Activated CD4-positive, alpha-beta T cell treated with anti-CD3 and anti-CD28 coated beads for 36 hours (primary cell): ENCODE measurements at regions of chr4 and their contacts with region 1.

Region 1: DNA sequence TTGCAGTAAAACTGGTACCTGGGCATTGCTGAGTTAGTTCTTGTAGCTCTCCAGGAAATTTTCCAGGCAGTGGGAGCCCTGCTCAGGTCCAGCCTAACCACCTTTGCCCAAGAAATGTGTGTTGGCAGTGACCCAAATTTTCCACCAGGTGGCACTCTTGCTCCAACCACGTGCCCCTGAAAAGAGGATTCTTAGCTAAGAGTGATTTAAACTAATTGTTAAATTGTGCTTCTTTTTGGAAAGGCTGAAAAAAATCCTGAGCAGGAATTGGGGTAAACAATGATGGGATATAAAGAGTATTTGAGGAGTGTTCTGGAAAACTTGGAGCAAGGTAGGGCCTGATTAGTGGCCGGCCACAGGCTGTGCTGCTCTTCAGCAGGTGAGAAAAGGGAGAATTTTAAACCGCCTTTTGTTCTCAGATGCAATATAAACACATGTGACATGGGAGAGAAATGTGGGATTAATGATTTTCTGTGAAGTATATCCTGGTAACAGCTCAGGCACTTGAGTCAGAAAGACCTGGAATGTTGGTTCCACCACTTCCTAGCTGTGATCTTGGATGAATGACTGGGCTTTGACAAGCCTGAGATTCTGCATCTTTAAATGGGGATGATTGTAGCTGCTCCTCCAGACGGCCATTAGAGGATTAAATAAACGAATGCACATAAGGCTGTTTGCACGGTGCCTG is 219.6 kb downstream of the PTTG2 start:
- DNase-seq: peak; percentile 84
- ATAC-seq: peak; percentile 55
- H3K4me3 Mint-ChIP-seq: no peak overlapping the region
- H3K27ac Mint-ChIP-seq: no peak overlapping the region
- H3K4me1 Mint-ChIP-seq: peaks cover 37% of the 10 kb centered on the region
- H3K27me3 Mint-ChIP-seq: peaks cover 2% of the 10 kb centered on the region

Region 2: DNA sequence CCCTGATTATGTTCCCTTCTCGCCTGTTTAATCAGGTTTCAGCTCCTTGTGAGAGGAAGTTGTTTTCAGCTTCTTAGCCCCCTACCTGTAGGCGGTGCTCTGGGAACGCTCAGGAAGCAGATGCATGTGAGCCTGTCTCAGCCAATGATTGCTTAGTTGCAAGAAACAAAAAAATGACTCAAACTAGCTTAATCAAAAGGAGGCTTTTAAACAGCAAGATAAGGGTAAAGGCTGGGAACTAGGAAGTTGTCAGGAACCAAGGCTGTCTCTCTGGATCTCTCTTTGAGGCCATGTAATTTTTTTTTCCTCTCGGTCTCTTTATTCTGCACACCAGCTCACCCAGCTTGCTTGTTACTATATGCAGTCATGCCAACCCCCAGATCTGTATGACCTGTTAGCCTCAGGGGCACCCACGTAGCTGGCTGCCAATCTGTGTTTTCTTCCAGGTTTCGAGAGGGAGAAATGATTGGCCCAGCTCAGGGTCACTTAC is 110.5 kb before region 1 on chr4:
- CTCF ChIA-PET with region 1: interaction called, 16 read pairs
- POLR2A ChIA-PET with region 1: no interaction called
- intact Hi-C with region 1: no loop called
- DNase-seq: peak; percentile 65
- ATAC-seq: peak; percentile 83
- H3K4me3 Mint-ChIP-seq: no peak overlapping the region
- H3K27ac Mint-ChIP-seq: peak overlapping the region; percentile 59
- H3K4me1 Mint-ChIP-seq: peaks cover 20% of the 10 kb centered on the region
- H3K27me3 Mint-ChIP-seq: no peaks in the 10 kb centered on the region

Region 3: GRCh38 chr4:38223782-38224236 is 44.0 kb after region 1 on chr4:
- CTCF ChIA-PET with region 1: no interaction called
- POLR2A ChIA-PET with region 1: no interaction called
- intact Hi-C with region 1: no loop called
- DNase-seq: no peak
- ATAC-seq: no peak
- H3K4me3 Mint-ChIP-seq: no peak overlapping the region
- H3K27ac Mint-ChIP-seq: no peak overlapping the region
- H3K4me1 Mint-ChIP-seq: no peaks in the 10 kb centered on the region
- H3K27me3 Mint-ChIP-seq: no peaks in the 10 kb centered on the region

Region 4: GRCh38 chr4:38243388-38244053 is 63.7 kb after region 1 on chr4:
- CTCF ChIA-PET with region 1: interaction called, 11 read pairs
- POLR2A ChIA-PET with region 1: no interaction called
- intact Hi-C with region 1: no loop called
- DNase-seq: no peak
- ATAC-seq: peak; percentile 44
- H3K4me3 Mint-ChIP-seq: no peak overlapping the region
- H3K27ac Mint-ChIP-seq: no peak overlapping the region
- H3K4me1 Mint-ChIP-seq: peaks cover 19% of the 10 kb centered on the region
- H3K27me3 Mint-ChIP-seq: no peaks in the 10 kb centered on the region

Region 5: GRCh38 chr4:38562751-38563198 is 382.9 kb after region 1 on chr4:
- CTCF ChIA-PET with region 1: no interaction called
- POLR2A ChIA-PET with region 1: no interaction called
- intact Hi-C with region 1: loop called in 1 of 2 experiments (anchors 2 kb)
- DNase-seq: no peak
- ATAC-seq: no peak
- H3K4me3 Mint-ChIP-seq: no peak overlapping the region
- H3K27ac Mint-ChIP-seq: no peak overlapping the region
- H3K4me1 Mint-ChIP-seq: peaks cover 19% of the 10 kb centered on the region
- H3K27me3 Mint-ChIP-seq: peaks cover 8% of the 10 kb centered on the region

Region 6: DNA sequence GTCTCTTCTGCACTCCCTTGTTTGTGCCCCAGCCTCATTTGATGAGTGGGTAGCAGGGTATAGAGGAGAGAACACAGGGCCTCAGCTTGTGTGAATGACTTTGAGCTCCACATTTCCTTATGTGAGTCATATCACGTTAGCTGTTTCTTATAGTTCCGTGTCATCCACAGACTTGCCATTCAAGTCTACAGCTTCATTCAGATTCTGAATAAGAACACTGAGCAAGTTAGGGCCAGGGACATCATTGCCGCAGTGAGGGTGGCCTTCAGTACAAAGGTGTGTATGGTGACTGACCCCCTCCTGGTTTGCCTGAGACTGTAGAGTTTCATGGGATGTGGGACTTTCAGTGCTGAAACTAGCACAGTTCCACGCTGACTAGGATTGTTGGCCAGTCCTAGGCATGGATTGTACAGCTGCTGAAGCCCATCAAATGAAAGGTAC is 507.8 kb after region 1 on chr4:
- CTCF ChIA-PET with region 1: interaction called, 11 read pairs
- POLR2A ChIA-PET with region 1: no interaction called
- intact Hi-C with region 1: no loop called
- DNase-seq: peak; percentile 39
- ATAC-seq: peak; percentile 97
- H3K4me3 Mint-ChIP-seq: no peak overlapping the region
- H3K27ac Mint-ChIP-seq: peak overlapping the region; percentile 69
- H3K4me1 Mint-ChIP-seq: peaks cover 60% of the 10 kb centered on the region
- H3K27me3 Mint-ChIP-seq: no peaks in the 10 kb centered on the region

Region 7: DNA sequence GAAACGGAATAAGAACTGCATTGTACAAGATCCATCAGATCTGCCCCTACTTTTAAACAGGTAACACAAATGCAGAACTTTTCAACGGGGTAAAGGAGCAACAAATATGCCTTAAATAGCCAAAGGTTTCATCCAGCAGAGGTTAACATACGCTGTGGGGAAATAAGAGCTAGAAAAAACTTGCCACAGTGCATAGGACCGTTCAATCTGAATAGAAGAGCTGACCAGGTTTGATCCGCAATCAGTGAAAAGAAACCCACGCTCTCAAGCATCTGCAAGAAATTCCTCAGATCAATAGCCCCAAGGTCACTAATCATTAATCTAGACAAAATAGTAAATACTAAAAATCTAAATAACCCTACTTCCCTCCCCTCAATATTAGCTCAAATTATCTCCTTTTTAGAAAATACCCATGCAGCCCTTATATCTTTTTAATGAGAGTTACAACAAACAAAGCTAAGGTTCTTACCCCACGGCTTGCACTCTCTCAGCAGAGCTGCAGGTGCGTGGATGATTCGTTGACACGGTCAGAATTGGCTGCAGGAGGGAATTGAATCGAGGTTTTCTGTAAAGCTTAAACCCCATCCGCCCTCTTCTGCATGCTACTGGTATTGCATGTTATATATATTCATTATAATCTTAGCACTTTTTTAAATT is 602.7 kb after region 1 on chr4 and contains the start of gene TLR10:
- CTCF ChIA-PET with region 1: interaction called, 13 read pairs
- POLR2A ChIA-PET with region 1: interaction called, 3 read pairs
- intact Hi-C with region 1: loop called in 1 of 2 experiments (anchors 1 kb)
- DNase-seq: peak; percentile 37
- ATAC-seq: peak; percentile 63
- H3K4me3 Mint-ChIP-seq: no peak within 1 kb of the TSS
- H3K27ac Mint-ChIP-seq: no peak within 1 kb of the TSS
- H3K4me1 Mint-ChIP-seq: peaks cover 5% of the 10 kb centered on the region
- H3K27me3 Mint-ChIP-seq: no peaks in the 10 kb centered on the region
- total RNA-seq, gene TLR10: not detected